ENCODE measurements at regions of chr3 and their contacts with region 1.

Region 1: GRCh38 chr3:128680602-128681368 is 30.2 kb upstream of the RPN1 start:
- DNase-seq: peak; percentile 94 to 100
- H3K4me3 ChIP-seq: peak overlapping the region; percentile 73
- H3K27ac ChIP-seq: peak overlapping the region; percentile 82
- H3K4me1 ChIP-seq: peaks cover 8% of the 10 kb centered on the region
- H3K27me3 ChIP-seq: no peaks in the 10 kb centered on the region
- CTCF ChIP-seq: peak; percentile 91

Region 2: DNA sequence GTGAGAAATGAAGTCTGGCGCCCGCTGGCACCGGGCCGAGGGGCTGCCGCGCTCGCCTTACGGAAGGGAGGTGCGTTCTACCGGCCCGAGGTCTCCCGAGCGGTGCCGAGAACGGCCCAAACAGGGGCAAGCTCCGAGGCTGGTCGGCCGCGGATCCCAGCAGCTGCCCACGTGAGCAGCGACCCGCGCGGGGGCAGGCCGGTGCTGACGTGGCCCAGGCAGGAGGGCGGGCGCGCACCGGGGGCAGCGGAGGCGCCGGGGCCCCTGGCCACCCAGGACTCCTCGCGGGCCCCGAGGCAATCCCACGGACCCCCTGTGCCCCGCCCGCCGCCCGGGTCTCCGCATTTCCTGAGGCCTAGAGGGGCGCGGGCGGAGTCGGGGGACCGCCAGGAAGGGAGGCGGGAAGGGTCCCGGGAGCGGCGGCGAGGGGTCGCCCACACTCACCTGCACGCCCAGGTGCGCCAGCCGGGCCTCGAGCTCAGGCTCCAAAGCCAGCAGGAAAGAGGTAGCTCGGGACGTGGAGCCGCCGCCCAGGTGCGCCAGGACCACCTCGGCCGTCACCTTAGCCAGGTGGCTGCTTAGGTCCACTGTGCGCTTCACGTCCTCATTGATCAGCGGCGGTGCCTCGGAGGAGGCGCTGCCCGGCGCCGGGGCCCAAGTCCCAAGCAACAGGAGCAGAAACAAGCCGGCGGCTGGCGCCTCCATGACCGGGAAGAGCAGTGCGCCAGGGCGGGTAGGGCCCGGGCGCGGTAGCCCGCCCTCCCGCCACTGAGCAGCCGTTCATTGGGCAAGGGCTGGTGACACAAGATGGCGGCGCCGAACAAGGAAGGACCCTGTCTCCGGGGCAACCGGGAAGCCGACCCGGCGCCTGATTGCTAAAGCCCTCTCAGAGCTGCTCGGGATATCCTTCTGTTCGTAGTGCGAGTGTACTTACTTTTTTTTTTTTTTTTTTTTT is 30.4 kb before region 1 on chr3 and contains the start of gene RPN1:
- CTCF ChIA-PET with region 1: no interaction called
- POLR2A ChIA-PET with region 1: interaction called, 19 read pairs
- intact Hi-C with region 1: no loop called
- DNase-seq: peak; percentile 90 to 98
- H3K4me3 ChIP-seq: peak within 1 kb of the TSS; percentile 98
- H3K27ac ChIP-seq: peak within 1 kb of the TSS; percentile 92
- H3K4me1 ChIP-seq: peaks cover 9% of the 10 kb centered on the region
- H3K27me3 ChIP-seq: no peaks in the 10 kb centered on the region
- CTCF ChIP-seq: no peak
- total RNA-seq, gene RPN1: 185 and 191 TPM in 2 replicates

Region 3: DNA sequence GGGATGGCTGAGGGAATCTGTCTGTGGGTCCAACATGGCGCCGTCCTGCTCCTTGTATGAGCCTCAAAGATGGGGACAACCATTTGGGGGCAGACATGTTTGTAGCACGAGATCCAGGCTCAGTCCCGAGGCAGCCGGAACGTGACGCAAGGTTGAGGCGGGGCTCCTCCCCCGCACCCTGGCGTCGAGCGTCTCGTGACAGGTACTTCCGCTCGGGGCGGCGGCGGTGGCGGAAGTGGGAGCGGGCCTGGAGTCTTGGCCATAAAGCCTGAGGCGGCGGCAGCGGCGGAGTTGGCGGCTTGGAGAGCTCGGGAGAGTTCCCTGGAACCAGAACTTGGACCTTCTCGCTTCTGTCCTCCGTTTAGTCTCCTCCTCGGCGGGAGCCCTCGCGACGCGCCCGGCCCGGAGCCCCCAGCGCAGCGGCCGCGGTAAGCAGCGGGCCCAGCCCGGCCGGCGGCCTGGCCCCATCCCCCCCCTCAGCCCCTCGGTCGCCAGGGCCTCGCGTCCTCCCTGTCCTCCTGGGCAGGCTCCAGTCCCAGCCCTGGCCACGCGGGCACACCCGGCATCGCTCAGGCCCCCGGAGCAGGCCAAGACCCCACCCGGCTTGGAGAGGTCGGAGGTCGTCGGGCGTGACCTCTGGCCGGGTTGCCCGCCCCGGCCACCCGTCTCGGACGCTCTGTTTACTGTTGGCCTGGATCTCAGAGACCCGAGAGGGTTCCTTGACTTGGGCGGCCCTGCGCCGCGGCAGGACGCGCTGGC is 45.3 kb after region 1 on chr3 and contains the start of gene RAB7A:
- CTCF ChIA-PET with region 1: interaction called, 14 read pairs
- POLR2A ChIA-PET with region 1: interaction called, 4 read pairs
- intact Hi-C with region 1: loop called (anchors 1 kb)
- DNase-seq: peak; percentile 88 to 97
- H3K4me3 ChIP-seq: peak within 1 kb of the TSS; percentile 99
- H3K27ac ChIP-seq: peak within 1 kb of the TSS; percentile 73
- H3K4me1 ChIP-seq: peaks cover 31% of the 10 kb centered on the region
- H3K27me3 ChIP-seq: no peaks in the 10 kb centered on the region
- CTCF ChIP-seq: no peak
- total RNA-seq, gene RAB7A: 197 and 319 TPM in 2 replicates

Region 4: DNA sequence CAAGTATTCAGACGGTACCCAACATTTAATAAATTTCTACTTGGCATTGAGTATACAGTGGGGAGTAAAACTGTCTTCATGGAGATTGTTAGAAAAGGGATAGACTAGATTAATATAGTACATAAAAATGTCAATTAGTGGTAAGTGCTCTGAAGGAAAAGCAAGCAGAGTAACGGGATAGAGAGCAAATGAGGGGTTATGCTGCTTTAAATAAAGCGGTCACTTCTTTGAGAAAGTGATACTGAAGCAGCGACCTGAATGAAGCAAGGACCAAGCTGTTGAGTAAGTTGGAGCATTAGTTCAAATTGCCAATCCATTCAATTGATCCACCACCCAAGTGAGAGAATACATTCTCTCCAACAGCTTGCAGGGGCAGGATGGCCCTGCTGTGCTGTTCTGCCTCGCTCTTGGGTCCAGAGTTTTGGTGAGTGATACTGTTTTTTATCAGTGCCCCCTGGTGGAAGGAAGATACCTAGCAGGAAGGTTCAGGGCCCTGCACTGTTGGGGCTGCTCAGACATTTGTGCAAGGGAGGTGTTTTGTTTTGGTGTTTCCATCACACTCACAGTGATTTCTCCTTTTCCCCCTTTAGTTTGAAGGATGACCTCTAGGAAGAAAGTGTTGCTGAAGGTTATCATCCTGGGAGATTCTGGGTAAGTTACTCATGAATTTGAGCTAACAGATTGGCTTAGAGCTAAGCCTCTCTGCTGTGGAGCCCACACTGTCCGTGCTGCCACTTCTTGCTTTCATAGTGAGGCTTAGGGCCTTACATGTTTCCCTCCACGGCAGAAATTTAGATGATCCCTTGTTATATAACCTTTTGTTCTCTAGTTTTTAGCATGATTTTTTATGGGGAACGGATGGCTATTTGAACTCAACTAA is 114.2 kb after region 1 on chr3:
- CTCF ChIA-PET with region 1: interaction called, 21 read pairs
- POLR2A ChIA-PET with region 1: no interaction called
- intact Hi-C with region 1: loop called (anchors 1 kb)
- DNase-seq: peak in 1 of 2 experiments; percentile 55
- H3K4me3 ChIP-seq: no peak overlapping the region
- H3K27ac ChIP-seq: peak overlapping the region; percentile 41; the same call in 1 of the 2 replicates
- H3K4me1 ChIP-seq: 0 out of 2 replicates have a peak, but pooled peaks cover 7% of the 10 kb centered on the region
- H3K27me3 ChIP-seq: no peaks in the 10 kb centered on the region
- CTCF ChIP-seq: peak; percentile 85

Region 5: GRCh38 chr3:128950223-128950938 is 269.6 kb after region 1 on chr3:
- CTCF ChIA-PET with region 1: no interaction called
- POLR2A ChIA-PET with region 1: no interaction called
- intact Hi-C with region 1: loop called (anchors 5 kb)
- DNase-seq: peak in 1 of 2 experiments; percentile 47
- H3K4me3 ChIP-seq: no peak overlapping the region
- H3K27ac ChIP-seq: no peak overlapping the region
- H3K4me1 ChIP-seq: no peaks in the 10 kb centered on the region
- H3K27me3 ChIP-seq: no peaks in the 10 kb centered on the region
- CTCF ChIP-seq: peak; percentile 50

Measured in PC-9 (cell line).